T-cell (primary cell): ENCODE measurements at regions of chr22 and their contacts with region 1.

Region 1: GRCh38 chr22:37594237-37594636 is 14.3 kb upstream of the LGALS2 start:
- DNase-seq: no peak
- ATAC-seq: no peak
- H3K4me3 ChIP-seq: no peak overlapping the region
- H3K4me3 Mint-ChIP-seq: no peak overlapping the region
- H3K27ac ChIP-seq: no peak overlapping the region
- H3K27ac Mint-ChIP-seq: no peak overlapping the region
- H3K4me1 ChIP-seq: peaks cover 0 to 6% of the 10 kb centered on the region in 2 experiments
- H3K4me1 Mint-ChIP-seq: peaks cover 12 to 13% (median 12%) of the 10 kb centered on the region in 3 donors
- H3K27me3 ChIP-seq: peaks cover 0 to 5% of the 10 kb centered on the region in 2 experiments
- H3K27me3 Mint-ChIP-seq: peaks cover 0 to 2% of the 10 kb centered on the region in 2 donors

Region 2: GRCh38 chr22:37538590-37539357 is 55.5 kb before region 1 on chr22:
- CTCF ChIA-PET with region 1: interaction called, 7 to 14 read pairs
- POLR2A ChIA-PET with region 1: no interaction called
- DNase-seq: peak; percentile 75 to 93 (median 85)
- ATAC-seq: peak; percentile 99 to 100 (median 100)
- H3K4me3 ChIP-seq: no peak overlapping the region
- H3K4me3 Mint-ChIP-seq: peak overlapping the region in 1 of 3 donors; percentile 63
- H3K27ac ChIP-seq: no peak overlapping the region
- H3K27ac Mint-ChIP-seq: peak overlapping the region in 1 of 2 donors; percentile 69
- H3K4me1 ChIP-seq: peaks cover 0 to 24% of the 10 kb centered on the region in 2 experiments
- H3K4me1 Mint-ChIP-seq: peaks cover 16 to 39% (median 30%) of the 10 kb centered on the region in 3 donors
- H3K27me3 ChIP-seq: peaks cover 0 to 37% of the 10 kb centered on the region in 2 experiments
- H3K27me3 Mint-ChIP-seq: peaks cover 14 to 25% of the 10 kb centered on the region in 2 donors